ENCODE measurements at regions of chr19 and their contacts with region 1.

Region 1: DNA sequence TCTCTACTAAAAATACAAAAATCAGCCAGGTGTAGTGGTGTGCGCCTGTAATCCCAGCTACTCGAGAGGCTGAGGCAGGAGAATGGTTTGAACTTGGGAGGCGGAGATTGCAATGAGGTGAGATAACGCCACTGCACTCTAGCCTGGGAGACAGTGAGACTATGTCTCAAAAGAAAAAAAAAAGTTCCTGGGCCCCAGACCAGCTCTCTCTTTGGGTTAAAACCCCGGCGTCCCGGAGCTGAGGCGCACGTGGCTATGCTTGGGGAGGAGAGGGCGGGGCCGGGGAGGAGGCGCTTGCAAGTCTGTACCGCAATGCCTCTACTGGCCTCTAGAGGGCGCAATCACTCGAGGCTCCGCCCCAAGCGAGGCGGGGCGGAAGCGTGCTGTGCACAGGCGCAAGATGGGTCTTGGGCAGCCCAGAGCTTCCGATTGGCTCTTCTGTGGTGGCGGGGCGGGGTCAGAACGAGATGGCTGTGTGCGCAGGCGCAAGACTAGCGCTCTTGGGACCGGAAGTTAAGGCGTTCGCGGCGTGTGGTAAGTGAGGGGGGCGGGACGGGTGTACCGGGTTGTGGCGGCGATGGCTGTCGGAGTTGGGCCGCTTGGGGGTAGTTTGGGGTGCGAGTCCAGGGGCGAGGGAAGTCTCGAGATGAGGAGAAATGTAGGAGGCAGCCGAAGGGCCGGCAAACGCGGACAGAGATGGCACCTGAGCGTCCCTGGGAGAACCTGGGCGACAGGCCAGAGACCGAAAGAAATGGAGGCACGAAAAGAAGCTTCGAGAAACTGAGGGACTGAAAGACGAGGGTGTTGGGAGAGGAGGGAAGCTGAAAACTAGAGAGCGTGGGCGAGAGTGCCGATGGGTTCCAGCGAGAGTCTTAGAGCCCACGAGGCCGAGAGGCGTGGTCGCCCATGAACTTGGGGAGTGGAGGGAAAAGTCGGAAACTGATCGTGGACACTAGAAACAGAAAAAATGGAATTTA is at the start of gene DHX34:
- DNase-seq: peak; percentile 99
- ATAC-seq: peak; percentile 99
- H3K4me3 Mint-ChIP-seq: peak within 1 kb of the TSS; percentile 97
- H3K27ac Mint-ChIP-seq: peak within 1 kb of the TSS; percentile 93
- H3K4me1 Mint-ChIP-seq: peaks cover 37% of the 10 kb centered on the region
- H3K27me3 Mint-ChIP-seq: no peaks in the 10 kb centered on the region
- total RNA-seq, gene DHX34: 12.6 to 13.1 TPM

Region 2: DNA sequence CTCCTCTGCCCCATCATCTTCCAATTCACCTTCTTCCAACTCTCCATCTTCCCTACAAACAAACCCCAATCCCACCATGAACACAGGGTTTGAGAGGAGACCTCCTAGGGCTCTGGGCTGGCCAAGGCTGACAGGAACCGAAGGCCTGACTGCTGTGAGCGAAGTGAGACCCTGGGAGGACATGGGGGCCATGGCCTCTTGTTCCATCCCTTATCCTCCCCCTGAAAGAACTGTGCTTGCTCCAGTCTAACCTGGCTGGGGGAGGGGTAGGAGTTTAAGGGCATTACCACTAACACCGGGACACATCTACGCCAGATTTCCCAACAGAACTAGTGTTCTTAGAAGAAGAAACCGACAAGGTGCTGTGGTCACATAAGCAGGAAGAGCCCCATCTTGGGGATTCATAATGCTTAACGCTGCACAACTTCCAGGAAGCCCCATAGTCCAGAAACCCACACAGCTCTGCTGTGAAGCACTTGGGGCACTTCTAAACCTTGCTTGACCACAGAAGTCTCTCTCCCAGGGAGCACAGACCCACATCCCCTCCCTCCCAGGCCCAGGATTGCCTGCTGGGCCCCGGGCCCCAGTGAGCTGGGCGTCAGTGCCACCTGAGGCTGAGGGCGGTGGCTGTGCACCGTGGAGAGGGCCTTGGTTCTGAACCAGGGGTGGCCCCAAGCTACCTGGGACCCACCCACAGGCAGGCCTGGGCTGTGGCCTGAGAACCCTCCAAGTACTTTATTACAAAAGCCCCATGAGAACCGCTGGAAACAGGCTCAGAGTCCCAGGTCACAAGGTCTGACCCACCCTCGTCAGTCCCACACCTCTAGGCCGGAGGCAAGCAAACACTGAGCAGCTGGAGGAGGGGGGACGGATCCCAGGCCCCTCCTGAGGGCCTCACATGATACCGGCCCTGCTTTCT is 254.3 kb before region 1 on chr19:
- CTCF ChIA-PET with region 1: no interaction called
- POLR2A ChIA-PET with region 1: no interaction called
- DNase-seq: peak; percentile 64
- ATAC-seq: peak; percentile 82
- H3K4me3 Mint-ChIP-seq: peak overlapping the region; percentile 78
- H3K27ac Mint-ChIP-seq: peak overlapping the region; percentile 87
- H3K4me1 Mint-ChIP-seq: peaks cover 79% of the 10 kb centered on the region
- H3K27me3 Mint-ChIP-seq: no peaks in the 10 kb centered on the region

Region 3: GRCh38 chr19:47305309-47305751 is 43.8 kb before region 1 on chr19:
- CTCF ChIA-PET with region 1: interaction called, 11 read pairs
- POLR2A ChIA-PET with region 1: no interaction called
- DNase-seq: peak; percentile 55
- ATAC-seq: no peak
- H3K4me3 Mint-ChIP-seq: no peak overlapping the region
- H3K27ac Mint-ChIP-seq: no peak overlapping the region
- H3K4me1 Mint-ChIP-seq: peaks cover 12% of the 10 kb centered on the region
- H3K27me3 Mint-ChIP-seq: no peaks in the 10 kb centered on the region

Region 4: DNA sequence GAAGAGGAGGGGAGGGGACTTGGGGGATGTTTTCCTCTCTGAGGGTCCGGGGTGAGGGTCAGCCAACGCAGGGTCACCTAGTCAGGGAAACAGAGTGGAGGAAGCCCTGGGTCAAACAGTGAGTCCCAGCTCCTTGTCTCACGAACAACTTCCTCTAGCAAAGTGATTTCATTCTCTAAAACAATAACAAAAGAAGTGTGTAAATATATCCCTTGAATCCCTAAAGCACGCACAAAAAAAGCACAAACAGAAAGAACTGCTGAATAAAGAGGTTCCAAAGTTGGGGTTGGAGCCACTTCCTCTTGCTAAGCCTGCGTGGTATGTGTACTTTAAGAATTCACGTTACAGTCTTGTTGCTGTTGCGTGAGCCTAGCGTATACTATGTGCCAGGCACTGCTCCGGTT is 18.6 kb before region 1 on chr19:
- CTCF ChIA-PET with region 1: interaction called, 22 read pairs
- POLR2A ChIA-PET with region 1: interaction called, 5 read pairs
- DNase-seq: no peak
- ATAC-seq: no peak
- H3K4me3 Mint-ChIP-seq: no peak overlapping the region
- H3K27ac Mint-ChIP-seq: no peak overlapping the region
- H3K4me1 Mint-ChIP-seq: peaks cover 5% of the 10 kb centered on the region
- H3K27me3 Mint-ChIP-seq: peaks cover 3% of the 10 kb centered on the region

Region 5: DNA sequence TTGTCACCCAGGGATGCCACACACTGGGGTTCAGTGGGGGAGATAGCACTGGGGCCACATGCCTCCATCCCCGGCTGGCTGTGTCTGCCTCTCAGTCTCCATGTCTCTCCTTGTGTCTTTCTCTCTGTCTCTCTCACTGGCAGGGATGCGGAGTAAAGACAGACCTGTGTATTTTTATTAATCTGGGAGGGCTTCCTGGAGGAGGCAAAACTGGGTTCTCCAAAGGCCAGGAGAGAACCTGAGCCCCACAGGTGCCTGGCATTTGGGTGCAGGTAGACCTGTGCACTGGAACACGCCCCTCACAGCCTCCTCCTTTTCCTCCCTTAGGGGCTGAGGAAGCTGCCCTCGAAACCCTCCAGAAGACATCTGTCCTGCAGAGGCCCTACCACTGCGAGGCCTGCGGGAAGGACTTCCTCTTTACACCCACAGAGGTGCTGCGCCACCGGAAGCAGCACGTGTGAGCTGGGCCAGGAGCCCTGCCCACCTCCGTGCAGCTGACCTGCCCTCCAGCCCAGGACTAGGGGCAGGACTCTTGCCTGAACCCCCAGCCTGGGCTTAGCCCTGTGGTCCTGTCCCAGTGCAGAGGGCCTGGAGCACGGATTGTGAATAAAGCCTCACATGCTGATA is 32.7 kb after region 1 on chr19:
- CTCF ChIA-PET with region 1: interaction called, 10 read pairs
- POLR2A ChIA-PET with region 1: no interaction called
- DNase-seq: peak; percentile 63
- ATAC-seq: peak; percentile 73
- H3K4me3 Mint-ChIP-seq: no peak overlapping the region
- H3K27ac Mint-ChIP-seq: peak overlapping the region; percentile 68
- H3K4me1 Mint-ChIP-seq: peaks cover 30% of the 10 kb centered on the region
- H3K27me3 Mint-ChIP-seq: no peaks in the 10 kb centered on the region

Region 6: DNA sequence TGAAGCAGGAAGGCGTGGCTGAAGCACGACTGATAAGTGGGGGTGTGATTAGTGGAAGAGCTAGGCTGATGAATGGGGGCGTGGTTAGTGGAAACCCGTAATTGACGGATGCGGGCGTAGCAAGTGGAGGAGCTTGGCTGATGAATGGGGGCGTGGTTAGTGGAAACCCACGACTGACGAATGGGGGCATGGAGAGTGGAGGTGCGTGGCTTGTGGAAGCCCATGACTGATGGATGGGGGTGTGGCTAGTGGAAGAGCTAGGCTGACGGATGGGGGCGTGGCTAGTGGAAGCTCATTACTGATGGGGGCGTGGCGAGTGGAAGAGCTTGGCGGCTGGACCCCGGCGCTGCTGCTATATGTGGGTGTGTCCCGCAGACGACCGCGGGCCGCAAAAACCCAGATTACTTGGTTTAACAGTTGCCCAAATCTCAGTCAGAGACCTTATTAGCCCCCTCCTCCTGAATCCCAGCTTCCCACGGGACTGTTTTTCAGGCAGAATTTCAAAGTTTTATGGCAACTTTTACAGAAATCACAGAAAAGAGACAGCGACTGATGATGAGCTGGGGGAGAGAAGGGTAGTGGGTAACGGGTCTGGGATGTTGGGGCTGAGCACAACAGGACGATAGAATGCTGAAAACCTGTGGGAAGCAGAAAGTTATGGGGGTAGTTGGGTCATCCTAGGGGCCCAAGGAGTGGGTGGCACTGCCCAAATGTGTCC is 79.2 kb after region 1 on chr19:
- CTCF ChIA-PET with region 1: interaction called, 25 read pairs
- POLR2A ChIA-PET with region 1: no interaction called
- DNase-seq: peak; percentile 96
- ATAC-seq: peak; percentile 88
- H3K4me3 Mint-ChIP-seq: no peak overlapping the region
- H3K27ac Mint-ChIP-seq: no peak overlapping the region
- H3K4me1 Mint-ChIP-seq: peaks cover 31% of the 10 kb centered on the region
- H3K27me3 Mint-ChIP-seq: peaks cover 32% of the 10 kb centered on the region